CD14-positive monocyte (primary cell): ENCODE measurements at regions of chr16 and their contacts with region 1.

Region 1: DNA sequence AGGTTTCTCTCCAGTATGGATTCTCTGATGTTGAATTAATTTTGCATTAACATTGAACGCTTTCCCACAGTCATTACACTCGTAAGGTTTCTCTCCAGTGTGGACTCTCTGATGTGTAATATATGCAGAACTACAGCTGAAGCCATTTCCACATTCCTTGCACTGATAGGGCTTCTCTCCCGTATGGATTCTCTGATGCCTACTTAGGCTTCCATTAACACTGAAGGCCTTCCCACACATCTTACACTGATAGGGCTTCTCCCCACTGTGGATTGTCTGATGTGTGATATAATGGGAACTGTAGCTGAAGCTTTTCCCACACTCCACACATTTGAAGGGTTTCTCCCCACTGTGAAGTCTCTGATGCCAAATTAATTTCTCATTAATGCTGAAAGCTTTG is 7.2 kb upstream of the TLE7 start:
- DNase-seq: no peak
- H3K4me3 ChIP-seq: peak overlapping the region in 1 of 3 experiments; percentile 13
- H3K4me3 Mint-ChIP-seq: no peak overlapping the region
- H3K27ac ChIP-seq: no peak overlapping the region
- H3K27ac Mint-ChIP-seq: no peak overlapping the region
- H3K4me1 ChIP-seq: no peaks in the 10 kb centered on the region
- H3K4me1 Mint-ChIP-seq: no peaks in the 10 kb centered on the region
- H3K27me3 ChIP-seq: no peaks in the 10 kb centered on the region
- H3K27me3 Mint-ChIP-seq: peaks cover 0 to 2% (median 1%) of the 10 kb centered on the region in 3 donors
- CTCF ChIP-seq: no peak

Region 2: DNA sequence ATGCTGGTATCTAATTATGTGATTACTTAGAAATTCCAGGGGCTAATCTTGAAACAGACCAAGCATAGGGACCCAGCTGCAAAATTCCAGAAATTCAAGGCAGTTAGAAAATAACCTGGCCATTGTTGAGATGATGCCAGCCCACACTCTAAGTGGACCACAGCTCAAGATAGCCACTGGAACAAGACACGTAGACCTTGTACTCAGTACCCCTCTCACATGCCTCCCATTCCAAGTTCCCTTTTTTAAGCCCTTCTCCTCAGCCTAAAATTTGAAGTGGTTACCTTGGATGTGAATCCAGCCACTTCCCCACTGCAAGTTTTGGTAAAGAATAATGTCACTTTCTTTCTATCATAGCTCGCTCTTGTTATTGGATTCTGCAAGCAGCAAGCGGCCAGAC is 44.2 kb after region 1 on chr16:
- intact Hi-C with region 1: loop called in 1 of 2 experiments (anchors 5 kb)
- DNase-seq: no peak
- H3K4me3 ChIP-seq: no peak overlapping the region
- H3K4me3 Mint-ChIP-seq: no peak overlapping the region
- H3K27ac ChIP-seq: no peak overlapping the region
- H3K27ac Mint-ChIP-seq: no peak overlapping the region
- H3K4me1 ChIP-seq: no peaks in the 10 kb centered on the region
- H3K4me1 Mint-ChIP-seq: no peaks in the 10 kb centered on the region
- H3K27me3 ChIP-seq: no peaks in the 10 kb centered on the region
- H3K27me3 Mint-ChIP-seq: peaks cover 0 to 9% (median 5%) of the 10 kb centered on the region in 3 donors
- CTCF ChIP-seq: no peak

Region 3: GRCh38 chr16:71855937-71856662 is 407.1 kb after region 1 on chr16:
- intact Hi-C with region 1: no loop called
- DNase-seq: no peak
- H3K4me3 ChIP-seq: no peak overlapping the region
- H3K4me3 Mint-ChIP-seq: no peak overlapping the region
- H3K27ac ChIP-seq: no peak overlapping the region
- H3K27ac Mint-ChIP-seq: peak overlapping the region in 1 of 7 donors; percentile 51
- H3K4me1 ChIP-seq: no peaks in the 10 kb centered on the region
- H3K4me1 Mint-ChIP-seq: peaks cover 9% of the 10 kb centered on the region
- H3K27me3 ChIP-seq: no peaks in the 10 kb centered on the region
- H3K27me3 Mint-ChIP-seq: no peaks in the 10 kb centered on the region
- CTCF ChIP-seq: no peak